ENCODE measurements at regions of chr22 and their contacts with region 1.

Region 1: GRCh38 chr22:21001560-21002325 is at the start of gene THAP7:
- DNase-seq: peak; percentile 59
- H3K4me3 ChIP-seq: peak within 1 kb of the TSS; percentile 71
- H3K27me3 ChIP-seq: no peaks in the 10 kb centered on the region
- CTCF ChIP-seq: no peak
- polyA plus RNA-seq, gene THAP7: 17.9 and 24.4 TPM in 2 replicates

Region 2: GRCh38 chr22:20725987-20726558 is 275.7 kb before region 1 on chr22:
- CTCF ChIA-PET with region 1: no interaction called
- POLR2A ChIA-PET with region 1: no interaction called
- DNase-seq: peak; percentile 3
- H3K4me3 ChIP-seq: no peak overlapping the region
- H3K27me3 ChIP-seq: no peaks in the 10 kb centered on the region
- CTCF ChIP-seq: no peak

Region 3: GRCh38 chr22:20953668-20954500 is 47.9 kb before region 1 on chr22:
- CTCF ChIA-PET with region 1: no interaction called
- POLR2A ChIA-PET with region 1: no interaction called
- DNase-seq: peak; percentile 6
- H3K4me3 ChIP-seq: no peak overlapping the region
- H3K27me3 ChIP-seq: no peaks in the 10 kb centered on the region
- CTCF ChIP-seq: no peak

Region 4: DNA sequence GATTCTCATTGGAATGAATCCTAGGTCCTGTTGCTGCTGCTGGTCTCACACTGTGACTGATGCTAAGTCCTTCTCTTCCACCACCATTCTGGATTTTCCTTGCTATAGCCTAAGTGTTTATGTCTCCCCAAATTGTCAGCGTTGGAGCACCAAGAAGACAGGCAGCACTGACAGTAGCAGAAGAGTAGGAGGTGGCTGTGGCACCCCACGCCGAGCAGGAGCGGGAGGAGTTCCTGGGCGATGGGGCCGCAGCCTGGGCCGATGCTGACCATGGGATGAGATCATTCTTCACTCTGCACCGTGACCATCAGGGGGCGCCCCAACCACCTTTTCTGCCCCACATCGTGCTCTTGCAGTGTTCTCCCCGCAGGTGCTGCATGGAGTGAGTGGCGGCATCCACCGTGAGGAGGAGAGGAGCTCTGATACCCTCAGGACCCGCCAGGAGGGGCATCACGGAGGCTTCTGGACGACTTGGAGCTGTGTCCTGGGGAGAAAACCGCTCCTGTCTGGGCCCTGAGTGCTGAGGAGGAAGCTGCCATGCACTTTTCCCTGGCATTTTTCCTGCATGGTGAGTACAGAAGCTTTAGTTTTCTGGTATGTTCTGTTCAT is 101.0 kb after region 1 on chr22:
- CTCF ChIA-PET with region 1: interaction called, 10 read pairs
- POLR2A ChIA-PET with region 1: no interaction called
- DNase-seq: no peak
- H3K4me3 ChIP-seq: no peak overlapping the region
- H3K27me3 ChIP-seq: no peaks in the 10 kb centered on the region
- CTCF ChIP-seq: peak; percentile 75

Measured in BJ (cell line).